Heart left ventricle (tissue), 16 donors: ENCODE measurements at regions of chr1 and their contacts with region 1.

Region 1: GRCh38 chr1:184075055-184076029 is 23.8 kb downstream of the TSEN15 start:
- DNase-seq: peak in 2 of 5 donors; percentile 41 to 44
- ATAC-seq: peak; percentile 68 to 89 (median 81)
- H3K4me3 ChIP-seq: no peak overlapping the region
- H3K27ac ChIP-seq: peak overlapping the region; percentile 4 to 69 (median 55)
- H3K4me1 ChIP-seq: peaks cover 0 to 40% (median 9%) of the 10 kb centered on the region in 12 donors
- H3K27me3 ChIP-seq: no peaks in the 10 kb centered on the region
- CTCF ChIP-seq: peak; percentile 66 to 87 (median 80)
- POLR2A ChIP-seq: no peak

Region 2: DNA sequence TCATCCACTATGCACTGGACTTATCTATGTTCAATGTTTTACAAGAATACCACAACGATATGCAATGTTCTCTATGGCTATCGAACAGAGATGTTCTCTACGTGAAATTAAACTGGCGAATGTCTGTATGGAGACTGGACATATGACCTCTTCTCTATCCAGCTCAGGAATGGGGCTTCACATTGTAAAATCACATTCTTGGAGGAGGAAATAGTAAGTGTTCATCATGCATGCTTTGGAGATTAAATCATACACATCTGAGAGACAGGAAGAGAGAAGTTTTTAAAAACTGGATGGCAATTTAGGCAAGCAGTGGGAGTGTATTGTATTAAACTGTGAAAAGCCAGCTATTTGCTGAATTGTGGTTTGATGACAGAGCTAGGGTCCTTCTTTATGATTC is 318.3 kb before region 1 on chr1:
- intact Hi-C with region 1: no loop called
- DNase-seq: no peak
- ATAC-seq: peak in 2 of 4 donors; percentile 26 to 38
- H3K4me3 ChIP-seq: no peak overlapping the region
- H3K27ac ChIP-seq: no peak overlapping the region
- H3K4me1 ChIP-seq: peaks cover 0 to 28% (median 7%) of the 10 kb centered on the region in 12 donors
- H3K27me3 ChIP-seq: no peaks in the 10 kb centered on the region
- CTCF ChIP-seq: no peak
- POLR2A ChIP-seq: no peak

Region 3: GRCh38 chr1:183956559-183957188 is 118.7 kb before region 1 on chr1:
- intact Hi-C with region 1: no loop called
- DNase-seq: no peak
- ATAC-seq: peak in 3 of 4 donors; percentile 74 to 86 (median 74)
- H3K4me3 ChIP-seq: no peak overlapping the region
- H3K27ac ChIP-seq: peak overlapping the region in 11 of 12 donors; percentile 28 to 86 (median 45)
- H3K4me1 ChIP-seq: peaks cover 0 to 55% (median 11%) of the 10 kb centered on the region in 12 donors
- H3K27me3 ChIP-seq: no peaks in the 10 kb centered on the region
- CTCF ChIP-seq: peak in 5 of 12 donors; percentile 9 to 38 (median 15)
- POLR2A ChIP-seq: no peak

Region 4: GRCh38 chr1:184163674-184164465 is 88.5 kb after region 1 on chr1:
- intact Hi-C with region 1: no loop called
- DNase-seq: peak in 3 of 5 donors; percentile 20 to 54 (median 34)
- ATAC-seq: peak; percentile 51 to 74 (median 58)
- H3K4me3 ChIP-seq: no peak overlapping the region
- H3K27ac ChIP-seq: peak overlapping the region in 3 of 12 donors; percentile 1 to 66 (median 37)
- H3K4me1 ChIP-seq: peaks cover 0 to 76% (median 17%) of the 10 kb centered on the region in 12 donors
- H3K27me3 ChIP-seq: no peaks in the 10 kb centered on the region
- CTCF ChIP-seq: no peak
- POLR2A ChIP-seq: no peak

Region 5: GRCh38 chr1:184222652-184223052 is 147.3 kb after region 1 on chr1:
- intact Hi-C with region 1: loop called (anchors 1 to 5 kb)
- DNase-seq: peak in 4 of 5 donors; percentile 42 to 53 (median 50)
- ATAC-seq: peak; percentile 43 to 73 (median 66)
- H3K4me3 ChIP-seq: peak overlapping the region in 10 of 12 donors; percentile 12 to 56 (median 36)
- H3K27ac ChIP-seq: peak overlapping the region in 2 of 12 donors; percentile 14 to 32
- H3K4me1 ChIP-seq: peaks cover 0 to 10% (median 1%) of the 10 kb centered on the region in 12 donors
- H3K27me3 ChIP-seq: no peaks in the 10 kb centered on the region
- CTCF ChIP-seq: peak; percentile 91 to 99 (median 96)
- POLR2A ChIP-seq: no peak

Region 6: DNA sequence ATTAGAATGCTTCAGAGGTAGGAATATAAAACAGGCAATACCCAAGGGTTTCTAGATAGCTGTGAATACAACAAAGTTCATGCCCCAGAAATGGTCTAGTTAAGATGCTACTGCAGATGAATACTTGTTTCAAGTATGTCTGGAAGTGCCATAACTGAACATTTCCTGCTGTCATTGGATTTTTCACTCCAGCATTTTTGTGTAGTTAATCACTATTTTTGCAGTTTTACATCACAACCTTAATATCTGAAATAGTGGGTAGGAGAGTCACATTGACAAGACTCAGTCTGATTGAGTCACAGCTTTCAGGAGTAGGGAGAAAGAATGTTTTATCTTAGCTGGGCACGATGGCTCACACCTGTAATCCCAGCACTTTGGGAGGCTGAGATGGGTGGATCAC is 185.0 kb after region 1 on chr1:
- intact Hi-C with region 1: no loop called
- DNase-seq: no peak
- ATAC-seq: no peak
- H3K4me3 ChIP-seq: no peak overlapping the region
- H3K27ac ChIP-seq: no peak overlapping the region
- H3K4me1 ChIP-seq: peaks cover 0 to 16% (median 4%) of the 10 kb centered on the region in 12 donors
- H3K27me3 ChIP-seq: no peaks in the 10 kb centered on the region
- CTCF ChIP-seq: no peak
- POLR2A ChIP-seq: no peak

Region 7: DNA sequence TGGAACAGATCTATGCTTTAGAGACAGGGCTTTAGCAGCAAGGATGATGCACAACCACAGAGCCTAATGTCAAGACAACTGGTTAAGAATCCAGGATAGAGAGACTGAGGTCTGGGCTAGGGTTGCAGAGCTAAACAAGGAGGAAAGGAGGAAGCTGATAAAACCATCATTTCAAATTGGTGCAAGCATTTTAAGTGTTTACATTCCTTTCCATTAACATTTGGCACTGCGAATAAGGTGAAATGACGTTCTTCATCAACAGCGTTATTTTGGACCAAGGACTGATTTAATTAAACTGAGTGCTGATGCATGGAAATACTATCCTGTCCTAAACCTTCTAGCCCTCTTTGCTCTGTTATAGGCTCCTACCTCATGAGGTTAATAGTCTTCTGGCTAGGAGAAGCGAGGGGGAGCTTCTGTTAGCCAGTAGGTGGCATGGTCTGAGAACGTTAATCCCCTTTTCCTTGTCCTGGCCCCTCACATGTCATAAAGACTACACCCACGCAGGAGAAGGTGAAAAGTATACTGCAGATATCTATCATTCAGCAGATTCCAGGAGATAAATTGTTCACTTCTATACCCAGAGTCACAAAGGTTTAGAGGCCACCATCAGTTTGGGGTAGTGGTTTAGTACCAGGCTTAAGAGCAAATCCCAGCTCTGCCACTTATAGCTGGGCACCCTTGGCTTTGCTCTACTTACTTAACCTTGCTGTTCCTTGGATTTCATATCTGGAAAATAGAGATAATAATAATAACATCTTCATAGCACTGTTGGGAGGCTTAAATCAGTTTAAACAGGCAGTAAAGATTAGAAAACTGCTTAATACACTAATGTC is 304.0 kb after region 1 on chr1:
- intact Hi-C with region 1: loop called in 3 of 10 experiments (anchors 10 kb)
- DNase-seq: no peak
- ATAC-seq: peak; percentile 51 to 62 (median 56)
- H3K4me3 ChIP-seq: no peak overlapping the region
- H3K27ac ChIP-seq: no peak overlapping the region
- H3K4me1 ChIP-seq: peaks cover 0 to 8% (median 0%) of the 10 kb centered on the region in 12 donors
- H3K27me3 ChIP-seq: no peaks in the 10 kb centered on the region
- CTCF ChIP-seq: peak in 10 of 12 donors; percentile 17 to 48 (median 32)
- POLR2A ChIP-seq: no peak

Region 8: GRCh38 chr1:184483101-184483683 is 407.9 kb after region 1 on chr1:
- intact Hi-C with region 1: loop called in 1 of 10 experiments (anchors 10 kb)
- DNase-seq: peak in 2 of 5 donors; percentile 57
- ATAC-seq: peak in 3 of 4 donors; percentile 33 to 60 (median 33)
- H3K4me3 ChIP-seq: no peak overlapping the region
- H3K27ac ChIP-seq: peak overlapping the region; percentile 17 to 79 (median 70)
- H3K4me1 ChIP-seq: peaks cover 11 to 86% (median 71%) of the 10 kb centered on the region in 12 donors
- H3K27me3 ChIP-seq: no peaks in the 10 kb centered on the region
- CTCF ChIP-seq: peak in 7 of 12 donors; percentile 8 to 40 (median 21)
- POLR2A ChIP-seq: no peak

Region 9: GRCh38 chr1:184684285-184685074 is 609.1 kb after region 1 on chr1:
- intact Hi-C with region 1: loop called in 1 of 10 experiments (anchors 5 kb)
- DNase-seq: peak; percentile 15 to 66 (median 48)
- ATAC-seq: peak in 3 of 4 donors; percentile 58 to 83 (median 80)
- H3K4me3 ChIP-seq: no peak overlapping the region
- H3K27ac ChIP-seq: no peak overlapping the region
- H3K4me1 ChIP-seq: peaks cover 0 to 9% (median 0%) of the 10 kb centered on the region in 12 donors
- H3K27me3 ChIP-seq: no peaks in the 10 kb centered on the region
- CTCF ChIP-seq: no peak
- POLR2A ChIP-seq: no peak